Activated naive CD4-positive, alpha-beta T cell treated with anti-CD3 and anti-CD28 coated beads for 36 hours (primary cell): ENCODE measurements at regions of chr9 and their contacts with region 1.

Region 1: GRCh38 chr9:33076358-33077004 is at the start of gene SMU1:
- DNase-seq: peak; percentile 98
- H3K4me3 Mint-ChIP-seq: peak within 1 kb of the TSS; percentile 96
- H3K27ac Mint-ChIP-seq: peak within 1 kb of the TSS; percentile 97
- H3K4me1 Mint-ChIP-seq: peaks cover 50% of the 10 kb centered on the region
- H3K27me3 Mint-ChIP-seq: no peaks in the 10 kb centered on the region
- total RNA-seq, gene SMU1: 23.7 to 23.9 TPM

Region 2: GRCh38 chr9:32571969-32572899 is 504.2 kb before region 1 on chr9:
- CTCF ChIA-PET with region 1: no interaction called
- intact Hi-C with region 1: loop called (anchors 2 kb)
- DNase-seq: peak; percentile 88
- H3K4me3 Mint-ChIP-seq: peak overlapping the region; percentile 88
- H3K27ac Mint-ChIP-seq: peak overlapping the region; percentile 92
- H3K4me1 Mint-ChIP-seq: peaks cover 16% of the 10 kb centered on the region
- H3K27me3 Mint-ChIP-seq: no peaks in the 10 kb centered on the region

Region 3: DNA sequence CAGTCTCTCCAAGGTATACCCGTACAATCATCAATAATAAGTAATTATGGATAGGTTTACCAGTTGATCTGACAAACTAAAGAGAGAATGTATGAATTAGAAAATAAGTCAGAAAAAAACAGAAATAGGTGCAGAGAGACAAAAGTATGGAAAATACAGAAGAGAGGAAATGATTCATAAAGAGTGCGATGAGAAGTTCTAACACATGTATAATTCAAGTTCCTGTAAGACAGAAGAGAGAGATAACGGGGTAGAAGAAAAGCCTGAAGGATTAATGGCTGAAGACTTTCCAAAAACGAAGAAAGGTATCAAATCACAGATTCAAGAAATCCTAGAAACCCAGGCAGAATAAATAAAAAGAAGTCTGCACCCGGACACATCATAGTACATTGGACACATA is 16.2 kb after region 1 on chr9:
- CTCF ChIA-PET with region 1: no interaction called
- intact Hi-C with region 1: loop called (anchors 1 kb)
- DNase-seq: no peak
- H3K4me3 Mint-ChIP-seq: peak overlapping the region; percentile 34
- H3K27ac Mint-ChIP-seq: peak overlapping the region; percentile 83
- H3K4me1 Mint-ChIP-seq: peaks cover 11% of the 10 kb centered on the region
- H3K27me3 Mint-ChIP-seq: no peaks in the 10 kb centered on the region

Region 4: DNA sequence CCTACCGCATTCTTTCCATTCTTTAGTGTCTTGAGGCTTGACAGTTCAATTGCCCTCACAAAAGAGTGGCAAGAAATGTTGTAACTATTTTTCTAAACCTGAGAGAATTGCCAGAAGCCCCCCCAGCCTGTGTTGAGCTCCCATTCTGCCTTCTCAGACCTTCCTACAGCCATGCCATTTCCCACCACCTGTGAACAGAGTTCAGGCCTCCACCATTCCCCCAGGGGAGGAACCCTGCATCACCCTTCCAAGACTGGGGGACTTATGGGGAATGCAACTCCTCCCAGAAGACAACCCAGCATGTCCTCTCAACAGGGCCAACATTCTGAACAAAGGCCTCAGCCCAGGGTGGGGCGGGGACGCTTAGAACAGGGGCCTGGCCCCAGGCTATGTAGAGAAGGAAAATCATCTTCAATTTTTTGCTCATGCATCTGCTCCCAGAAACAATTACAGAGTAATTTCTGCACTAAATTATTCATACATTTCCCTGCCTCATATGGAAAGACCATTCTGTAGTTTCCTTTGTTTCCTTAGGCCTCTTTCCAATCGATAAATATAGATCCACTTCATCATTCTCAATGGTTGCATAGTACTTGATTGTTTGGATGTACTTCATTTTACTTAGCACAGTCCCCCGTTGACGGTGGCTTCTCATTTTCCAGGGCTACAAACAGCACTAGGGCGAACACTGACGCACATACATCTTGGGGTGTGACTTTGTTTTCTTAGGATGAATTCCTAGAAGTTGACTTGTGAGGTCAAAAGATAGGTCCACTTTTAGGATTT is 27.0 kb after region 1 on chr9:
- CTCF ChIA-PET with region 1: no interaction called
- intact Hi-C with region 1: no loop called
- DNase-seq: no peak
- H3K4me3 Mint-ChIP-seq: no peak overlapping the region
- H3K27ac Mint-ChIP-seq: no peak overlapping the region
- H3K4me1 Mint-ChIP-seq: no peaks in the 10 kb centered on the region
- H3K27me3 Mint-ChIP-seq: no peaks in the 10 kb centered on the region

Region 5: DNA sequence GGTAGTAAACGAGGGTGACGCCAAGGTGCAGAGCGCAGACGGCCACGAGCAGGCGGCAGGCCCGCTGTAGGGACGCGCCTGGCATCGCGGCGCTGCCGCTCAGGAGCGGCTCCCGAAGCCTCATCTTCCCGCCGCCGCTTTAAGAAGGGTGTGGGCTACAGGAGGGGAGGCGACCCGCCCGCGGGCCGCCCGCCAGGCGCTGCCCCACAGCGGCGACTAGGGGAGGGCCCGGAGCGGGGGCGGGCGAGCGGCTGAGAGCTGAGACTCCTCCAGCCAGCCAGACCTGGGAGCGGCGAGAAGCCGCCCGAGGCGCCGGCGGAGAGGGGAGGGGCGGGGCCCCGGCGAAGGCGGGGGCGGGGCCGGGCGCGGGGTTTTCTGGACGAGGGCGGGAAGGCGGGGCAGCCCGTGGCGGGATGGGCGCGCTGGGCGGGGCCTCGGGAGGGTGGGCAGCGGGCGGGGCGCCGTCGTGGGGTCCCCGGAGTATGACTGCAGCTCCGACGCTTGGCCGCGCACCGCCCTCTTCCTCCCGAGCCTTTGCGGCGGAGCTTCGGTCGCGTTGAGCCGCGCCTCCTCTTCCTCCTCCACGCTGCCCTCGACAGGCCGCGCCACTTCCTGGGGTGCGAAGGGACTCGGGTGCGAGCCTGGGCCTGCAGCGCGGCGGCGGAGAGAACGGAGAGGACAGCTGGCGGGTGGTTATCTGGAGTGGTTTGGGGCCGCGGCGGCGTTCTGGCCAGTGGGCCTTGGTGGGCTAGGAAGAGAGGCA is 90.7 kb after region 1 on chr9 and contains the start of gene B4GALT1:
- CTCF ChIA-PET with region 1: interaction called, 16 read pairs
- intact Hi-C with region 1: loop called (anchors 1 kb)
- DNase-seq: peak; percentile 97
- H3K4me3 Mint-ChIP-seq: peak within 1 kb of the TSS; percentile 97
- H3K27ac Mint-ChIP-seq: peak within 1 kb of the TSS; percentile 97
- H3K4me1 Mint-ChIP-seq: peaks cover 53% of the 10 kb centered on the region
- H3K27me3 Mint-ChIP-seq: no peaks in the 10 kb centered on the region
- total RNA-seq, gene B4GALT1: 42.8 to 44.1 TPM

Region 6: DNA sequence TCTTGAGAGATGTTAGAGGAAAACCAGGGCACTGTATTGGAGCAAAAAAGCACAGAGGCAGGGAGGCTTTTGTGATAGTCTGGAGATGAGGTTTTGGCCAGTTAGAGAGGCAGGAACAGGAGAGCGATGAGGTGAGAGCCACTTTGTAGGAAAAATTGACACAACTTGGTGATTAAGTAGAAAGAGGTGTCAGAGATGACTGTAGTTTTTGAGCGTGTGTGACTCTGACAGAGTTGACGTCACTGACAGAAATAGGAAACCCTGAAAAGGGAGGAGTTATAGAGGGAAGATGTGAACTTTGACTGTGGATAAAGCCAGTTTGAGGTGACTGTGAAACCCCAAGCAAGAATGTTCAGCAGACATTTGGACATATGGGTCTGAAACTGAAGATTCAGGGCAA is 229.6 kb after region 1 on chr9:
- CTCF ChIA-PET with region 1: no interaction called
- intact Hi-C with region 1: loop called (anchors 5 kb)
- DNase-seq: peak; percentile 69
- H3K4me3 Mint-ChIP-seq: no peak overlapping the region
- H3K27ac Mint-ChIP-seq: no peak overlapping the region
- H3K4me1 Mint-ChIP-seq: peaks cover 10% of the 10 kb centered on the region
- H3K27me3 Mint-ChIP-seq: no peaks in the 10 kb centered on the region

Region 7: DNA sequence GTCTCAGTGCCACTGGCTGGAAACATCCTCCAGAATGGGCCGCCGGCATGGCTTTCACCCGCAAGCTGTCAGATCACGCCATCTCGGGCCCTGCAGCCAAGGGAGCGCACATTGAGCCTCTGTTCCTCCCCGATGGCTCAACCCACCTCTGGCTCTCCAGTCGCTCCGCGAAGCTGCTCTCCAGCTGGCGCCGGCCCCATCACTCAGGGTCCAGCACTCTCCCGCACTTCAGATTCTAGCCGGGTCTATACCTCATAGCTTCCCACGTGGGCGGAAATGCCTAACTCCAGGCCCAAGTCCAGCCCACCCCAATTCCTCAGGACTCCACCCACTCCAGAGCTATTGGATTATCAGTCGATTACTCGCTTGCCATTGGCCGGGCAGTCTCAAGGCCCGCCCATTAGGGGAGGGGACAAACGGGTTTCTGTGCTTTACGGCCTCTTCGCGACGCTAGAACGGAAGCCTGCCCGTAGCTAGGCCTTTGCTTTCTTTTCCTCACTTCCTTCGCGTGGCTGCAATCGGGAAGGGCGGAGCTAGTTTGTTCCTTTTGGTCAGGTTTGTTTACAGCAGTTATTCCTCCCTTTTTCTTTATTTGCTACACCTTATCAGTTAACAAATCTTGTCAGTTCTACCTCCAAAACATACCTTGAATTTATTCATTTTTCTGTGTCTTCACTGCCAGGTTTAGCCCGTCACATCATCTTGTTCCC is 397.3 kb after region 1 on chr9 and contains the start of gene NOL6:
- CTCF ChIA-PET with region 1: no interaction called
- intact Hi-C with region 1: loop called (anchors 1 kb)
- DNase-seq: peak; percentile 99
- H3K4me3 Mint-ChIP-seq: peak within 1 kb of the TSS; percentile 95
- H3K27ac Mint-ChIP-seq: peak within 1 kb of the TSS; percentile 93
- H3K4me1 Mint-ChIP-seq: peaks cover 29% of the 10 kb centered on the region
- H3K27me3 Mint-ChIP-seq: no peaks in the 10 kb centered on the region
- total RNA-seq, gene NOL6: 38.2 to 38.6 TPM